Ovary (tissue), 10 donors: ENCODE measurements at regions of chr11 and their contacts with region 1.

Region 1: GRCh38 chr11:59615637-59616395 is at the start of gene OSBP:
- DNase-seq: peak; percentile 99 to 100 (median 99)
- H3K4me3 ChIP-seq: peak within 1 kb of the TSS; percentile 84
- H3K27ac ChIP-seq: peak within 1 kb of the TSS; percentile 77 to 92
- H3K4me1 ChIP-seq: peaks cover 3% of the 10 kb centered on the region
- H3K27me3 ChIP-seq: no peaks in the 10 kb centered on the region
- CTCF ChIP-seq: peak in 1 of 3 donors; percentile 45
- EP300 ChIP-seq: no peak
- POLR2A ChIP-seq: peak; percentile 74
- total RNA-seq, gene OSBP: 27.1 to 46.4 (median 42.4) TPM

Region 2: DNA sequence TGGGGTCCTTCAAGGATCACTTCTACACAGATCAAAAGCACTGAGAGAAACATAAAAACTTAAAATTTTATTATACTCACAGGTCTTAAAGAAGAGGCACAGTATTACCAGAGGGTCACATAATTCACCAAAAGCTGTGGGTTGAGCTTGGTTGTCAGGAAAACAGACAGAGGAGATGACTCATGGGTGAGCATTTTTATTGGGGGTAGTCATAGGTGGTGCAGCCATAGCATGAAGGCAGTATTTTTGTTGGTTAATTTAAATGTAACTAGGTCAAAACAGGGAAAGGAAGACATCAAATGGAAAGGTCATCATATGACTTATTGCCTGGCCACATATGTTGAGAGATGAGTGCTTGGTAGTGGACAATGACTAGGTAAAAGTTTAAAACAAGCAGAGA is 1281.1 kb before region 1 on chr11:
- intact Hi-C with region 1: no loop called
- DNase-seq: no peak
- H3K4me3 ChIP-seq: no peak overlapping the region
- H3K27ac ChIP-seq: no peak overlapping the region
- H3K4me1 ChIP-seq: no peaks in the 10 kb centered on the region
- H3K27me3 ChIP-seq: no peaks in the 10 kb centered on the region
- CTCF ChIP-seq: no peak
- EP300 ChIP-seq: no peak
- POLR2A ChIP-seq: no peak

Region 3: DNA sequence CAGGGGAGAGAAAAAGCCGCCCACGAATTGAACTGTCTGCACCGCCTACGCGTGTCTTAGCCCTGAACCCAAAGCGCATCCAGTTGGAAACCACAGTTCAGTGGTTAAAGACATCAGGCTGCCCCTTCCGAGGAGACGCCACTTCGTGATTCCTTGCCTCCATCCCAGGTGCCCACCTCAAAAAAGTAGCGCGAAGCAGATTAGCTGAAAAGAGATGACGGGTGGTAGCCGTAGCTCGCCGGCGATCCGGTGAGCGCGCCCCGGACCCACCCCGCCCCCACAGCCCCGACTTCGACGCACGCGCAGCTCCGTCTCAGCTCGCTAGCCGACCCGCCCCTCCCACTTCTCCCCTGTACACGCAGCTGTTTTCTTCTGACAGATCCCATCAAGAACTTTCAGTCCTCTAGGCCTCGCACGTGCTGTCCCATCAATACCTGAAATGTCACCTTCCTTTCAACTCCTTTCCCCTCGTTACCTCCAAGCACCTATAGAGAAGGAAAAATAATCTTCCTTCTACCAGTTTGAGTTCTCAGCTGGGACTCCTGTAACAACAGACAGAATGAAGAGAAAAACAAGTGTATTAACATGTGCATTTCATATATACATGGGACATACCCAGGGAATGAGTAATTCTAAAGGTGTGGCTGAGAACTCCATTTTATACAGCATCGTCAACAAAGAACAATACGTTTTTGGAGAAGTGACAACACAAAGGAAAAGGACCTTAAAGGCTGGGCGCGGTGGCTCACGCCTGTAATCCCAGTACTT is 54.9 kb before region 1 on chr11:
- intact Hi-C with region 1: loop called in 1 of 4 experiments (anchors 10 kb)
- DNase-seq: peak; percentile 85 to 90 (median 89)
- H3K4me3 ChIP-seq: peak overlapping the region; percentile 65
- H3K27ac ChIP-seq: peak overlapping the region; percentile 78 to 85
- H3K4me1 ChIP-seq: peaks cover 4% of the 10 kb centered on the region
- H3K27me3 ChIP-seq: no peaks in the 10 kb centered on the region
- CTCF ChIP-seq: no peak
- EP300 ChIP-seq: no peak
- POLR2A ChIP-seq: peak; percentile 33